ENCODE measurements at regions of chr1 and their contacts with region 1.

Region 1: GRCh38 chr1:246554201-246554600 is 11.9 kb downstream of the TFB2M start:
- DNase-seq: no peak
- ATAC-seq: peak in 1 of 4 donors; percentile 27
- H3K4me3 ChIP-seq: no peak overlapping the region
- H3K27ac ChIP-seq: no peak overlapping the region
- H3K4me1 ChIP-seq: no peaks in the 10 kb centered on the region
- H3K27me3 ChIP-seq: no peaks in the 10 kb centered on the region
- CTCF ChIP-seq: no peak

Region 2: DNA sequence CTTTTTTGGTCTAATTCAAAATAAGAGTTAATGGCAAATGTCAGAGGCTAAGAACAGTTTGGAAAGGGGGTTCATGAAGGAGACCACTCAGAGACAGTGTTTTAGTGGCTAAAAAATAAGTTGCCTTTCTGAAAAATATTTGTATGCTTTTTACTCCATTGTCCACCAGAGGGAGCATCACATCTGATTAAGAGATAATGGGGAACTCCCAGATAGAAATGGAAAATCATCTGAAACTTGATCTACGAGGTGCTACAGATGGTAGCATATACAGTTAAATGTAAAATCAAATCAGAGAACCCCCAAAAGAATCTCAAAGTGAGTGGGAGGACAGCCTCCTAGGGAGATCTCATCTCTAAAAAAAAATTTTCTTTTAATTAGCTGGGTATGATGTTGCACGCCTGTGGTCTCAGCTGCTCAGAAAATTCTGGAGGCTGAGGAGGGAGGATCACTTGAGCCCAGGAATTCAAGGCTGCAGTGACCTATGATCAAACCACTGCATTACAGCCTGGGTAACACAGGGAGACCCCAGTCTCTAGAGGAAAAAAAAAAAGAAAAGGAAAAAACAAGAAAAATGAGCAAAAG is 56.8 kb before region 1 on chr1:
- intact Hi-C with region 1: no loop called
- DNase-seq: no peak
- ATAC-seq: peak; percentile 40 to 59 (median 50)
- H3K4me3 ChIP-seq: no peak overlapping the region
- H3K27ac ChIP-seq: no peak overlapping the region
- H3K4me1 ChIP-seq: no peaks in the 10 kb centered on the region
- H3K27me3 ChIP-seq: no peaks in the 10 kb centered on the region
- CTCF ChIP-seq: peak; percentile 79

Region 3: DNA sequence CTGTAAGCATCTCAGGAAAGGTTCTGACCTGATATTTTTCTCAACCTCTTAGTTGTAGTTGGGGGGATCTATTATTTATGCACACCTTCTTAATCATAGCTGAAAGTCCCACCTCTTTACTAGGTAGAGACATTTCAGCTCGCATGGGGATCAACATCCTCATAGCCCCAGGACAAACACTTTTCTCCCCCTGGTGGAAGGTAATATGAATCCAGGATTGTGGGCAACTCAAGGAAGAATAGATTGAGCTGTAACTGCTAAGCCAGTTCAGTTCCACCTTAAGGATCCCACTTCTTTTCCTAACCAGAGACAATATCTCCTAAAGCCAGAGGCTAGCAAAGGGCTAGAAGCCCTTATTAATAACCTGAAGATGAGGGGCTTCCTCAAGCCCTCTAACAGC is 21.7 kb before region 1 on chr1:
- intact Hi-C with region 1: no loop called
- DNase-seq: no peak
- ATAC-seq: no peak
- H3K4me3 ChIP-seq: no peak overlapping the region
- H3K27ac ChIP-seq: no peak overlapping the region
- H3K4me1 ChIP-seq: peaks cover 1% of the 10 kb centered on the region
- H3K27me3 ChIP-seq: no peaks in the 10 kb centered on the region
- CTCF ChIP-seq: no peak

Region 4: GRCh38 chr1:246724016-246724730 is 170.0 kb after region 1 on chr1 and contains the start of gene SCCPDH:
- intact Hi-C with region 1: loop called in 1 of 2 experiments (anchors 10 kb)
- DNase-seq: peak; percentile 81 to 88
- ATAC-seq: peak; percentile 95 to 98 (median 97)
- H3K4me3 ChIP-seq: peak within 1 kb of the TSS; percentile 99
- H3K27ac ChIP-seq: peak within 1 kb of the TSS; percentile 90
- H3K4me1 ChIP-seq: no peaks in the 10 kb centered on the region
- H3K27me3 ChIP-seq: no peaks in the 10 kb centered on the region
- CTCF ChIP-seq: no peak
- total RNA-seq, gene SCCPDH: 22.6 to 41.8 (median 38.5) TPM

Measured in psoas muscle (tissue), 8 donors.